ENCODE measurements at regions of chr12 and their contacts with region 1.

Region 1: GRCh38 chr12:101773650-101774162 is 34.4 kb upstream of the SYCP3 start:
- DNase-seq: peak in 4 of 5 donors; percentile 41 to 63 (median 50)
- ATAC-seq: peak in 3 of 4 donors; percentile 69 to 77 (median 74)
- H3K4me3 ChIP-seq: no peak overlapping the region
- H3K27ac ChIP-seq: no peak overlapping the region
- H3K4me1 ChIP-seq: peaks cover 0 to 44% (median 1%) of the 10 kb centered on the region in 12 donors
- H3K27me3 ChIP-seq: no peaks in the 10 kb centered on the region
- CTCF ChIP-seq: peak in 11 of 12 donors; percentile 89 to 99 (median 95)
- POLR2A ChIP-seq: no peak

Region 2: DNA sequence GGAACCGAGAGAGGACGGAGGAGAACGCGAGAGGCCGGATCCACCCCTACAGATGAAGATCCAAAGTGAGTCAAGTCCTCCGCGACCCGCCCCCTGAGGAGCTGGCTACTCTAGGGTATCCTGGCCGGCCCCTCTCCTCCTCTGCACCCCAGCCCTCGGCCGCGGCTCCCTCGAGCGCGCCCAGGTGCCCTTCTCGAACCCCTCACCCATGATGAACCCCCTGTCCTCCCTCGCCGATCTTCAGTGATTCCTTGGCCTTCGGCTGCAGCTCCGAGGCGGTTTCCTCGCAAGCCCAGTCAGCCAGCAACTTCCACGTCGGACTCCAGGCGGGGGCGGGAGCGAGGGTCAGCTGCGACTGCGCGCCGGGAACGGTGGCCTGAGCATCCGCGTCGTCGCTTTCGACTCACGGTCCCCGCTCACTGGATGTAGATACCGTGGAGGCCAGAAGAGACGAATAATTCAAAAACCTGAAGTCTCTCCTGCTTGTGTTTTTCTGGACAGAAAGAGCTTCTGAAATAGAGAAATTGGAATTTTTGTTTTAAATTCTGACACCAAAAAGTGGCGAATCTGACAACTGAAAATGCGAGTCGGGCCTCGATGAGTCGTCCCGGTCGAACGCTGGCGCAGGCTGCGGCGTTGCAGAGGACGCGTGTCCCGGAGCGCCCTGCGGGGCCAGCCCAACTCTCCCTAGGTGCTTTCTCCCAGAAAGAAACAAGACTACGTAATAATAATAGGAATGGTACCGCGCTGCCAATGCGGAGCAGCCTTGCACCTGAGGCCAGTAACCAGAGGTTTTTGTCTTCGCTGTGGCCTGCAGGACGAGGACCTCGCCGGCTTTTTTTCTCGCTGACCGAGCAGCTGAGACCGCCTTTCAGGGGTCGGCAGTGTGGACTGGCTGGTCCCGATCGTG is 366.0 kb before region 1 on chr12 and contains the start of gene ARL1:
- intact Hi-C with region 1: loop called in 2 of 10 experiments (anchors 10 kb)
- DNase-seq: peak; percentile 86 to 93 (median 90)
- ATAC-seq: peak; percentile 92 to 97 (median 96)
- H3K4me3 ChIP-seq: peak within 1 kb of the TSS; percentile 47 to 92 (median 78)
- H3K27ac ChIP-seq: peak within 1 kb of the TSS; percentile 79 to 97 (median 92)
- H3K4me1 ChIP-seq: peaks cover 5 to 28% (median 18%) of the 10 kb centered on the region in 12 donors
- H3K27me3 ChIP-seq: no peaks in the 10 kb centered on the region
- CTCF ChIP-seq: no peak
- POLR2A ChIP-seq: peak in 1 of 2 donors; percentile 22
- total RNA-seq, gene ARL1: 69.1 to 115 (median 93.7) TPM

Region 3: DNA sequence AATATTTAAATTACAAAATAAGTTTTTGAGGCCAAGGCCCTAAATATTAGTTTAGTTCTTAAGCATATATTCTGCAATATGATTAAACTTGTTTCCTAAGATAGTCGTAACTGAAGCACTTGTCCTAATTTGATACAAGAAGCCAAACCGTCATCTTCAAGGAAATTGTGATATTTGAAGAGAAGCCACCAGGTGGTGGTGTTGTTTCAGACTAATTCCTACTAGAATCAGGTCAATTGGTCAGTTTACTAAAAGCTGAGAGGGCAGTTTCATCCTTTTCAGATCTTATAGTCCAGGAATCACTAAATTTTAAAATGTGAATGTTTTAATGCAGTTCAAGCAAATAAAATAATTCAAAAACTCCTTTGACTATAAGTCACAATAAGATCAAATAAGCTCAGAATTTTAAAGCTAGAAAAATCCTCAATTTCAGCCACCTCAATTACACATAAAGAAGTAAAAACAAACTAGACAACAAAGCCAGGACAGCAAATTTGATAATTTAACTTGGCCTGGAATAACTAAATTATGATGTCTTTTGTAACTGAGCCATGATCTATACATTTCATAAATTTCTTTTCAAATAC is 359.1 kb before region 1 on chr12:
- intact Hi-C with region 1: loop called in 2 of 10 experiments (anchors 10 kb)
- DNase-seq: peak in 1 of 5 donors; percentile 14
- ATAC-seq: no peak
- H3K4me3 ChIP-seq: no peak overlapping the region
- H3K27ac ChIP-seq: no peak overlapping the region
- H3K4me1 ChIP-seq: no peaks in the 10 kb centered on the region
- H3K27me3 ChIP-seq: no peaks in the 10 kb centered on the region
- CTCF ChIP-seq: peak; percentile 33 to 64 (median 51)
- POLR2A ChIP-seq: no peak

Region 4: GRCh38 chr12:101823891-101824290 is 50.2 kb after region 1 on chr12:
- intact Hi-C with region 1: no loop called
- DNase-seq: peak in 4 of 5 donors; percentile 61 to 72 (median 68)
- ATAC-seq: peak; percentile 86 to 94 (median 92)
- H3K4me3 ChIP-seq: peak overlapping the region in 2 of 12 donors; percentile 1 to 2
- H3K27ac ChIP-seq: peak overlapping the region; percentile 38 to 84 (median 70)
- H3K4me1 ChIP-seq: peaks cover 0 to 60% (median 33%) of the 10 kb centered on the region in 12 donors
- H3K27me3 ChIP-seq: no peaks in the 10 kb centered on the region
- CTCF ChIP-seq: peak in 4 of 12 donors; percentile 5 to 40 (median 10)
- POLR2A ChIP-seq: no peak

Region 5: DNA sequence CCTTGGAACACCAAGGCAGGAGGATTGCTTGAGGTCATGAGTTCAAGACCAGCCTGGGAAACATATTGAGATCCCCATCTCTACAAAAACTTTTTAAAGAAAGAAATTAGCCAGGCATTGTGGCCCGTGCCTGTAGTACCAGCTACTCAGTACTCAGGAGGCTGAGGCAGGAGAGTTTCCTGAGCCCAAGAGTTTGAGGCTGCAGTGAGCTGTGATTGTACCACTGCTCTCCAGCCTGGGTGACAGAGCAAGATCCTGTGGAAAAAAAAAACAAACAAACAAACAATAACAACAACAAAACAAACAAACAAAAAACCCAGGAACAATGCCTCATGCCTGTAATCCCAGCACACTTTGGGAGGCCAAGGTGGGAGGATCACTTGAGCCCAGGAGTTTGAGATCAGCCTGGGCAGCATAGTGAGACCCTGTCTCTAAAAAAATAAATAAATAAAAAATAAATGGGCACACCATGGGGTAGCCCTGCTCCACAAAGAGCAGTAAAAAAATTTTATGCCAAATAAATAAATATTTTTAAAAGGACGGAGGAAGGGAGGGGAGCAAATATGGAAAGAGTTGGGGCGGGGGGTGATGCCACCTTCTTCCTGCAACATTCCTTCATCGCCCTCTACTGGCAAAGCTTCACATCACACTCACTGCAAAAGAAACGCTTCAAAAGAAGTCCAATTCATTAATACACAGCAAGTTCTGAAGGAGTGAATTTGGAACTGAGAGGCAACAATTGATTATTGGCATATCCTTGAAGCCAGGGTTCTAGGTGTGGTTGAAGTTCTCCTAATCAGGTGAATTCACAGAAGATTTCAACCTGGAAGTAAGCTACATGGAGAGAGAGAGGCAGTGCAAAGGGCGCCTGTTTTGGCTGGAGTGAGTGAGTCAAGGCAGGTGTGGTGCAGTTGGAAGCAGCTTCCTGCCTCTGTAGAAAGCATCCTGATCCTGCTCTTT is 65.9 kb after region 1 on chr12:
- intact Hi-C with region 1: loop called in 6 of 10 experiments (anchors 2 to 5 kb)
- DNase-seq: peak in 4 of 5 donors; percentile 35 to 63 (median 58)
- ATAC-seq: peak; percentile 36 to 71 (median 64)
- H3K4me3 ChIP-seq: no peak overlapping the region
- H3K27ac ChIP-seq: no peak overlapping the region
- H3K4me1 ChIP-seq: peaks cover 0 to 14% (median 0%) of the 10 kb centered on the region in 12 donors
- H3K27me3 ChIP-seq: no peaks in the 10 kb centered on the region
- CTCF ChIP-seq: peak; percentile 80 to 93 (median 85)
- POLR2A ChIP-seq: no peak